Endothelial cell of umbilical vein (primary cell): ENCODE measurements at regions of chr6 and their contacts with region 1.

Region 1: DNA sequence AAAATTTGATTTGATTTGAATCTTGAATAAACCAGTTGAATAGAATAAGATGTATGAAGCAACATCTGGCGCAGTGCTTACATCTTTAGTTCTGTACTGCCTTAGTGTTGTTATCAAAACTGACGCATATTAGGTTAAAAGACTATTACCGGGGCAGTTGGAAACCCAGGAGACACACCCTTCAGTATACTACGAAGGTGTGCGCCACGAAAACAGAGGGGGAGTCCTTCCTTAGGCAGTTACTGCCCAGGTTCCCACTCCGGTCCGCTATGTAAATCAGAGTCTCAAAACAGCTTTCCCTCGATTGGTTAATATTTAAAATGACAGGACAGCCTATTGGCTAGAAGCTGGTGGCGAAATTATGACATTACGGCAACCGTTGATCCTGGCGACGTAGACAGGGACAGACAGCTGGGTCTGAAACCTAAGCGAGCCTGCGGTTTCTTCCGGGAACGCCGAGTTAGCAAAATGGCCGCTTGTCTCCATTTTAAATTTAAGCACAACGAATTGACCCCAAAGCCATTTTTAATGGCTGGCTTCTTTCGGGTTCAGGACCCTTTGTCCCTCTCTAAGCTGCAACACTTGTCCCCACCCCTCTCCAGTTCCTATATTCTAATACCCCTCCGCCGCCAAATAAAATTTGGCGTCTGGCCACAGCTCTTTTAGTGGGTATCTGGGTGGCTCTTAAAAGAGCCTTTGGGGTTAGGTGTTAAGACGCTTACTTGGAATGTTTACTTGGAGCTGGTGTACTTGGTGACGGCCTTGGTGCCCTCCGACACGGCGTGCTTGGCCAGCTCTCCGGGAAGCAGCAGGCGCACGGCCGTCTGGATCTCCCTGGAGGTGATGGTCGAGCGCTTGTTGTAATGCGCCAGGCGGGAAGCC is 35.8 kb downstream of the HFE start:
- DNase-seq: peak; percentile 97
- H3K4me3 ChIP-seq: peak overlapping the region; percentile 3 to 99 (median 97)
- H3K27ac ChIP-seq: peak overlapping the region; percentile 70
- H3K4me1 ChIP-seq: peaks cover 6% of the 10 kb centered on the region
- H3K27me3 ChIP-seq: no peaks in the 10 kb centered on the region
- CTCF ChIP-seq: no peak
- POLR2A ChIP-seq: peak; percentile 88

Region 2: GRCh38 chr6:26003102-26003694 is 119.8 kb before region 1 on chr6:
- CTCF ChIA-PET with region 1: no interaction called
- POLR2A ChIA-PET with region 1: no interaction called
- dilution Hi-C with region 1: no loop called
- intact Hi-C with region 1: no loop called
- DNase-seq: peak; percentile 74
- H3K4me3 ChIP-seq: no peak overlapping the region
- H3K27ac ChIP-seq: no peak overlapping the region
- H3K4me1 ChIP-seq: no peaks in the 10 kb centered on the region
- H3K27me3 ChIP-seq: no peaks in the 10 kb centered on the region
- CTCF ChIP-seq: peak; percentile 73 to 76
- POLR2A ChIP-seq: no peak

Region 3: DNA sequence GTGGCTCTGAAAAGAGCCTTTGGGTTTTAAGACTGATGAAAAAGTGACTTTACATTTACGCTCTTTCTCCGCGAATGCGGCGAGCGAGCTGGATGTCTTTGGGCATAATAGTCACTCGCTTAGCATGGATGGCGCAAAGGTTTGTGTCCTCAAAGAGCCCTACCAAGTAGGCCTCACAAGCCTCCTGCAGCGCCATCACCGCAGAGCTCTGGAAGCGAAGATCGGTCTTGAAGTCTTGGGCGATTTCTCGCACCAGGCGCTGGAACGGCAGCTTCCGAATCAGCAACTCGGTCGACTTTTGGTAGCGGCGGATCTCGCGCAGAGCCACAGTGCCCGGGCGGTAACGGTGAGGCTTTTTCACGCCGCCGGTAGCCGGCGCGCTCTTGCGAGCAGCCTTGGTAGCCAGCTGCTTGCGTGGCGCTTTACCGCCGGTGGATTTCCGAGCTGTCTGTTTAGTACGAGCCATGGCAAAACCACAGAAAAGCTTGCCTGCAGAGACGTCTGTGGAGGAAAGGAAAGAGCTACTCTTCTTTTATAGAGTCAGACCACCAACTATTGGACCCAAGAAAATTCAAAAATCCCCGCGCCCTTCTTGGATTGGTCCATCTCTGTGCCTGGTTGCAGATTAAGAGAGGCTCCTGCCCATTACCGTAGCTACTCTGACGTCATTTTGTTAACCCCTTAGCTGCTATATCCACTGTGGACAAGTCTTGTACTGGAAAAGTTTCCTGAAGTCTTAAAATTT is 91.3 kb before region 1 on chr6:
- CTCF ChIA-PET with region 1: interaction called, 7 read pairs
- POLR2A ChIA-PET with region 1: interaction called, 19 read pairs
- dilution Hi-C with region 1: no loop called
- intact Hi-C with region 1: loop called (anchors 1 kb)
- DNase-seq: peak; percentile 96
- H3K4me3 ChIP-seq: peak overlapping the region; percentile 45 to 78 (median 47)
- H3K27ac ChIP-seq: peak overlapping the region; percentile 88
- H3K4me1 ChIP-seq: peaks cover 33% of the 10 kb centered on the region
- H3K27me3 ChIP-seq: no peaks in the 10 kb centered on the region
- CTCF ChIP-seq: peak in 1 of 2 donors; percentile 29
- POLR2A ChIP-seq: peak; percentile 99

Region 4: DNA sequence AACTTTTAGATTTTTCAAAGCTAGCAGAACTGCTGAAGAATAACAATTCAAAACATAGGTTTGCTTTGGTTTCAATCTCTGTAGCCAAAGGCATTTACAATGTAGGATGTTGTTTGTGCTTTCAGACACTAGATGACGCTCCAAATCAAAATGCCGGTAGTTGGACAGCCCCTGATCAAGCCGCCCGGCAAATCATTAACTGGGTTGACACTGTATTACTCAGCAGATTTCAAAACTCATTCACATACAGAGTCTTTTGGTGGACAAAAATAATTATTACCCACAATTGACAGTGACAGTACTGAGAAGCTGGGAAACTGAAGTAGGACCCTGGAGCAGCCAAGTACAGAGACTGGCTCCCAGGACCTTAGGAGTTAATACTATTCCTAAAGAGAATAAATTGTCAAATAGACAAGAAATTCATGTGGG is 57.1 kb before region 1 on chr6:
- CTCF ChIA-PET with region 1: interaction called, 3 read pairs
- POLR2A ChIA-PET with region 1: interaction called, 3 read pairs
- dilution Hi-C with region 1: no loop called
- intact Hi-C with region 1: loop called (anchors 1 kb)
- DNase-seq: peak; percentile 79
- H3K4me3 ChIP-seq: no peak overlapping the region
- H3K27ac ChIP-seq: no peak overlapping the region
- H3K4me1 ChIP-seq: no peaks in the 10 kb centered on the region
- H3K27me3 ChIP-seq: peaks cover 14 to 29% of the 10 kb centered on the region in 2 experiments
- CTCF ChIP-seq: peak; percentile 74 to 79
- POLR2A ChIP-seq: no peak

Region 5: GRCh38 chr6:26156076-26156849 is 33.2 kb after region 1 on chr6:
- CTCF ChIA-PET with region 1: interaction called, 28 read pairs
- POLR2A ChIA-PET with region 1: interaction called, 265 read pairs
- dilution Hi-C with region 1: no loop called
- intact Hi-C with region 1: loop called (anchors 1 kb)
- DNase-seq: peak; percentile 94
- H3K4me3 ChIP-seq: peak overlapping the region; percentile 45 to 81 (median 68)
- H3K27ac ChIP-seq: peak overlapping the region; percentile 78
- H3K4me1 ChIP-seq: peaks cover 8% of the 10 kb centered on the region
- H3K27me3 ChIP-seq: peaks cover 0 to 3% of the 10 kb centered on the region in 2 experiments
- CTCF ChIP-seq: no peak
- POLR2A ChIP-seq: peak; percentile 97

Region 6: DNA sequence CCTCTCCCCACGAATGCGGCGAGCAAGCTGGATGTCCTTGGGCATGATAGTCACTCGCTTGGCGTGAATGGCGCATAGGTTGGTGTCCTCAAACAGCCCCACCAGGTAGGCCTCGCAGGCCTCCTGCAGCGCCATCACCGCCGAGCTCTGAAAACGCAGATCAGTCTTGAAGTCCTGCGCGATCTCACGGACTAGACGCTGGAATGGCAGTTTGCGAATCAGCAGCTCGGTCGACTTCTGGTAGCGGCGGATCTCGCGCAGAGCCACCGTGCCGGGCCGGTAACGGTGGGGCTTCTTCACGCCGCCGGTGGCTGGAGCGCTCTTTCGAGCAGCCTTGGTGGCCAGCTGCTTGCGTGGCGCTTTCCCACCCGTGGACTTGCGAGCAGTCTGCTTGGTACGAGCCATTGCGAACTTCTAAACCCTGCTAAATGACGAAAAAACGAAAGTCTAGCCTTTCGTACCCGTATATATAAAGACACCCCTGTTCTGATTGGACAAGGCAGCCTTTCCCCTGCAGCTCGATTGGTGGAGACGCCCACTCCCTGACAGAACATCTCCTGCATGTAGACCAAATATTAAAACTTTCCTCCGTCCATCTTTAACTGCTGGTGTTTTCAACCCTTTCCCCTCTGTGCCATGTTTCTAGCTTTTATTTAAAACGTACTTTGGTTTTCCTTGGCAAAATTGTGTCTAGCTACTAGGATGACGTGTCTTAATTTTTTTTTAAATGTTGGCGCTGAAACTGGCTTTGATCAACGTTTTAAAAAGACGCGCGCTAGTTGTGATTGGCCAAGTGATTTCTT is 74.0 kb after region 1 on chr6:
- CTCF ChIA-PET with region 1: interaction called, 20 read pairs
- POLR2A ChIA-PET with region 1: interaction called, 107 read pairs
- dilution Hi-C with region 1: no loop called
- intact Hi-C with region 1: loop called (anchors 1 kb)
- DNase-seq: peak; percentile 96
- H3K4me3 ChIP-seq: peak overlapping the region; percentile 1 to 98 (median 52)
- H3K27ac ChIP-seq: peak overlapping the region; percentile 94
- H3K4me1 ChIP-seq: peaks cover 19% of the 10 kb centered on the region
- H3K27me3 ChIP-seq: no peaks in the 10 kb centered on the region
- CTCF ChIP-seq: no peak
- POLR2A ChIP-seq: peak; percentile 97

Region 7: GRCh38 chr6:26270903-26271667 is 148.1 kb after region 1 on chr6:
- CTCF ChIA-PET with region 1: no interaction called
- POLR2A ChIA-PET with region 1: interaction called, 8 read pairs
- dilution Hi-C with region 1: no loop called
- intact Hi-C with region 1: loop called (anchors 2 kb)
- DNase-seq: peak; percentile 93
- H3K4me3 ChIP-seq: peak overlapping the region; percentile 41 to 77 (median 51)
- H3K27ac ChIP-seq: peak overlapping the region; percentile 72
- H3K4me1 ChIP-seq: peaks cover 25% of the 10 kb centered on the region
- H3K27me3 ChIP-seq: no peaks in the 10 kb centered on the region
- CTCF ChIP-seq: no peak
- POLR2A ChIP-seq: peak; percentile 90